CD8-positive, alpha-beta T cell (primary cell): ENCODE measurements at regions of chr17 and their contacts with region 1.

Region 1: GRCh38 chr17:51298508-51299371 is 38.4 kb downstream of the UTP18 start:
- DNase-seq: peak in 2 of 9 experiments; percentile 17 to 45
- ATAC-seq: no peak
- H3K4me3 ChIP-seq: no peak overlapping the region
- H3K4me3 Mint-ChIP-seq: no peak overlapping the region
- H3K27ac ChIP-seq: no peak overlapping the region
- H3K27ac Mint-ChIP-seq: no peak overlapping the region
- H3K4me1 ChIP-seq: no peaks in the 10 kb centered on the region
- H3K4me1 Mint-ChIP-seq: peaks cover 12% of the 10 kb centered on the region
- H3K27me3 ChIP-seq: no peaks in the 10 kb centered on the region
- H3K27me3 Mint-ChIP-seq: no peaks in the 10 kb centered on the region
- CTCF ChIP-seq: peak; percentile 53

Region 2: GRCh38 chr17:50967795-50968194 is 330.9 kb before region 1 on chr17:
- CTCF ChIA-PET with region 1: no interaction called
- POLR2A ChIA-PET with region 1: no interaction called
- intact Hi-C with region 1: no loop called
- DNase-seq: no peak
- ATAC-seq: no peak
- H3K4me3 ChIP-seq: no peak overlapping the region
- H3K4me3 Mint-ChIP-seq: no peak overlapping the region
- H3K27ac ChIP-seq: no peak overlapping the region
- H3K27ac Mint-ChIP-seq: no peak overlapping the region
- H3K4me1 ChIP-seq: no peaks in the 10 kb centered on the region
- H3K4me1 Mint-ChIP-seq: peaks cover 4% of the 10 kb centered on the region
- H3K27me3 ChIP-seq: no peaks in the 10 kb centered on the region
- H3K27me3 Mint-ChIP-seq: no peaks in the 10 kb centered on the region
- CTCF ChIP-seq: no peak

Region 3: DNA sequence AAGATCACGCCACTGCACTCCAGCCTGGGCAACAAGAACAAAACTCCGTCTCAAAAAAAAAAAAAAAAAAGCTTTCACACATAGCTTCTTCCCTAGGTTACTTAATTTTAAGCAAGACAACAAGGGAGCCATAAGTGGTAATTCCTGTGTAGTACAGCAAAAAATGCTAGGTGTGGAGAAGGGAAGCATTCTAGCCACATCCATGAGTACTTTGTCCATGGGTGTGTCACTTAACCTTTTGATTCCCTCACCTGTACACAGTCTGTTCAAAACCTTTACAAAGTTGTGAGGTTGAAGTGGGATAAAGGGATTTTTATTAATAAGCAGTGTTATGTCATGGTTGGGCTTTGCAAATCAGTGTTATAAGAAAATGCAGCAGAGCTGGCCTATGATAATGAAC is 128.0 kb before region 1 on chr17:
- CTCF ChIA-PET with region 1: no interaction called
- POLR2A ChIA-PET with region 1: no interaction called
- intact Hi-C with region 1: no loop called
- DNase-seq: no peak
- ATAC-seq: no peak
- H3K4me3 ChIP-seq: no peak overlapping the region
- H3K4me3 Mint-ChIP-seq: no peak overlapping the region
- H3K27ac ChIP-seq: no peak overlapping the region
- H3K27ac Mint-ChIP-seq: no peak overlapping the region
- H3K4me1 ChIP-seq: peaks cover 9% of the 10 kb centered on the region
- H3K4me1 Mint-ChIP-seq: peaks cover 18% of the 10 kb centered on the region
- H3K27me3 ChIP-seq: no peaks in the 10 kb centered on the region
- H3K27me3 Mint-ChIP-seq: no peaks in the 10 kb centered on the region
- CTCF ChIP-seq: no peak

Region 4: DNA sequence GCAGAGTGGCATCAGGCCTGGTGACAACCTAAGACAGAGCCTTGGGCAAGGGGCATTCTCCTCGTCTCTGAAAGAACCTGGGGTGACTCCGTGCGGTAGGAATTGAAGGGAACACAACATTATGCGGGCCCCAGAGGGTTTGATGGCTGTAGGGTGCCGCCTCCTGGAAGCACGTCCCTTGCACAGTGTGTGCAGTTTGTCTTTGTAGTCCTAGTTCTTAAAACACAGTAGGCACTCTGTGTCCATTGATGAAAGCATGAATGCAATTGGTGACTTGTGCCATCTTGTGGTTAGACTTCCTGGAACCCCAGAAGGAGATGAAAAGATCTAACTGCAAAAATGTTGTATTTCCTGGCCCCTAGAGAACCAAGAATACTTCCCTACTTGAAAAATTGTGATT is 241.4 kb after region 1 on chr17:
- CTCF ChIA-PET with region 1: interaction called, 14 read pairs
- POLR2A ChIA-PET with region 1: no interaction called
- intact Hi-C with region 1: loop called (anchors 2 kb)
- DNase-seq: peak in 2 of 9 experiments; percentile 7 to 21
- ATAC-seq: no peak
- H3K4me3 ChIP-seq: no peak overlapping the region
- H3K4me3 Mint-ChIP-seq: no peak overlapping the region
- H3K27ac ChIP-seq: no peak overlapping the region
- H3K27ac Mint-ChIP-seq: no peak overlapping the region
- H3K4me1 ChIP-seq: no peaks in the 10 kb centered on the region
- H3K4me1 Mint-ChIP-seq: peaks cover 11% of the 10 kb centered on the region
- H3K27me3 ChIP-seq: no peaks in the 10 kb centered on the region
- H3K27me3 Mint-ChIP-seq: no peaks in the 10 kb centered on the region
- CTCF ChIP-seq: no peak

Region 5: GRCh38 chr17:51640108-51640622 is 341.4 kb after region 1 on chr17:
- CTCF ChIA-PET with region 1: no interaction called
- POLR2A ChIA-PET with region 1: no interaction called
- intact Hi-C with region 1: loop called in 1 of 2 experiments (anchors 5 kb)
- DNase-seq: peak in 3 of 9 experiments; percentile 1 to 15 (median 2)
- ATAC-seq: no peak
- H3K4me3 ChIP-seq: no peak overlapping the region
- H3K4me3 Mint-ChIP-seq: no peak overlapping the region
- H3K27ac ChIP-seq: no peak overlapping the region
- H3K27ac Mint-ChIP-seq: no peak overlapping the region
- H3K4me1 ChIP-seq: no peaks in the 10 kb centered on the region
- H3K4me1 Mint-ChIP-seq: no peaks in the 10 kb centered on the region
- H3K27me3 ChIP-seq: peaks cover 0 to 3% of the 10 kb centered on the region in 2 experiments
- H3K27me3 Mint-ChIP-seq: peaks cover 10% of the 10 kb centered on the region
- CTCF ChIP-seq: no peak

Region 6: DNA sequence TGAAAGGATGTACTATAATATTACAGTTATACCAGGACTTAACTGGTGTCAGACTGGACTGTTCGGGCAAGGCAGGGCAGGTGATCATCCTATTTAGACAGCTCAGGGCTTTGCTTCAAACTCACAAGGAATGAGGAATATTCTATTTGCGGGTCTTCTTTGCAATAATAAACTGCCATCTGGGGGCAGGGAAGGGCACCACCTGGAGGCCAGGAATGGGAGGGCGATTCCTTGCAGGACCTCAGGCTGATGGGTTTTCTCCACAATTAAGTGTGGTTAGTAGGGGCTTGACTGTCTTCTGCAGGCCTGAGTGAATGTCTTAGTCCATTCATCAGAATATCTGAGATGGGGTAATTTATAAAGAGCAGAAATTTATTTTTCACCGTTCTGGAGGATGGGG is 435.7 kb after region 1 on chr17:
- CTCF ChIA-PET with region 1: interaction called, 3 read pairs
- POLR2A ChIA-PET with region 1: no interaction called
- intact Hi-C with region 1: loop called in 1 of 2 experiments (anchors 10 kb)
- DNase-seq: peak in 1 of 9 experiments; percentile 24
- ATAC-seq: no peak
- H3K4me3 ChIP-seq: no peak overlapping the region
- H3K4me3 Mint-ChIP-seq: no peak overlapping the region
- H3K27ac ChIP-seq: no peak overlapping the region
- H3K27ac Mint-ChIP-seq: no peak overlapping the region
- H3K4me1 ChIP-seq: no peaks in the 10 kb centered on the region
- H3K4me1 Mint-ChIP-seq: no peaks in the 10 kb centered on the region
- H3K27me3 ChIP-seq: no peaks in the 10 kb centered on the region
- H3K27me3 Mint-ChIP-seq: peaks cover 8% of the 10 kb centered on the region
- CTCF ChIP-seq: no peak

Region 7: GRCh38 chr17:52106638-52107261 is 808.0 kb after region 1 on chr17:
- CTCF ChIA-PET with region 1: no interaction called
- POLR2A ChIA-PET with region 1: no interaction called
- intact Hi-C with region 1: loop called in 1 of 2 experiments (anchors 5 kb)
- DNase-seq: peak in 5 of 9 experiments; percentile 4 to 27 (median 13)
- ATAC-seq: no peak
- H3K4me3 ChIP-seq: no peak overlapping the region
- H3K4me3 Mint-ChIP-seq: no peak overlapping the region
- H3K27ac ChIP-seq: no peak overlapping the region
- H3K27ac Mint-ChIP-seq: no peak overlapping the region
- H3K4me1 ChIP-seq: no peaks in the 10 kb centered on the region
- H3K4me1 Mint-ChIP-seq: no peaks in the 10 kb centered on the region
- H3K27me3 ChIP-seq: no peaks in the 10 kb centered on the region
- H3K27me3 Mint-ChIP-seq: peaks cover 7% of the 10 kb centered on the region
- CTCF ChIP-seq: peak; percentile 57